ENCODE measurements at regions of chr17 and their contacts with region 1.

Region 1: DNA sequence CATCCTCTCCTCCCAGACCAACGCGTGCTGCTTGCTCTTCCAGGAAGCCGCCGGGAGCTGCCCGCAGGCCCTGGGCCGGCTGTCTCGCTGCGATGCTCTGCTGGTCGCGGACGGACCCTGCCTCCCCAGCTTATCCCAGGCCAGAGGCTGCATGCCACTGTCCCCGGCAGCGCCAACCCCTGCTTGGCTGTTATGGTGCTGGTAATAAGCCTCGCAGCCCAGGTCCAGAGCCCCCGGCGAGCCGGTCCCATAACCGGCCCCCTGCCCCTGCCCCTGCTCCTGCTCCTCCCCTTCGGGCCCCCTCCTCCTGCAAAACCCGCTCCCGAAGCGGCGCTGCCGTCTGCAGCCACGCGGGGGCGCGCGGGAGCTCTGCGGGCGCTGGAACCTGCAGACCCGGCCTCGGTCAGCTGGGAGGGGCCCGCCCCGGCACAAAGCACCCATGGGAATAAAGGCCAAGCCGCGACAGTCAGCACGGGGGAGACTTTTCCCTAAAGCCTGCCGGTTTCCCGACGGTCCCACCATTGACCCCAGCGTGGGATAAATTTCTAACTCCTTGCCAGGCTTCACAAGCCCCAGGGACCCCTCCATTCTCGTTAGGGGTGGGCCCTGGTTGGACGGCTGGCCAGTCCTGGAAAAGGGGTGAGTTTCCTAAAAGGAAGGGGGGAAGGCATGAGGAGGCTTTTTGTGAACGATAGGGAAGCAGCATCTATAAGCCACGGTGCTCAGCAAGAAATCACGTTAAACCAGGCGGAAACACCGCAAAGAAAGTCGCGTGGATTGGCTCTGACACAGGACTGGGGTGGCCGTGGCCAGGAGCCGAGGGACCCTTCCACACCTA is 11.2 kb downstream of the ENPP7 start:
- DNase-seq: peak; percentile 71
- ATAC-seq: peak; percentile 55
- H3K4me3 Mint-ChIP-seq: no peak overlapping the region
- H3K27ac Mint-ChIP-seq: no peak overlapping the region
- H3K4me1 Mint-ChIP-seq: peaks cover 10% of the 10 kb centered on the region
- H3K27me3 Mint-ChIP-seq: peaks cover 43% of the 10 kb centered on the region

Region 2: GRCh38 chr17:79728226-79728907 is 13.6 kb before region 1 on chr17:
- CTCF ChIA-PET with region 1: interaction called, 18 read pairs
- DNase-seq: peak; percentile 93
- ATAC-seq: peak; percentile 89
- H3K4me3 Mint-ChIP-seq: peak overlapping the region; percentile 60
- H3K27ac Mint-ChIP-seq: peak overlapping the region; percentile 85
- H3K4me1 Mint-ChIP-seq: peaks cover 19% of the 10 kb centered on the region
- H3K27me3 Mint-ChIP-seq: no peaks in the 10 kb centered on the region

Region 3: GRCh38 chr17:79777894-79778503 is 36.0 kb after region 1 on chr17 and contains the start of gene CBX2:
- CTCF ChIA-PET with region 1: interaction called, 28 read pairs
- DNase-seq: peak; percentile 81
- ATAC-seq: peak; percentile 87
- H3K4me3 Mint-ChIP-seq: peak within 1 kb of the TSS; percentile 77
- H3K27ac Mint-ChIP-seq: peak within 1 kb of the TSS; percentile 47
- H3K4me1 Mint-ChIP-seq: peaks cover 12% of the 10 kb centered on the region
- H3K27me3 Mint-ChIP-seq: peaks cover 67% of the 10 kb centered on the region
- total RNA-seq, gene CBX2: 5.3 to 6.8 TPM

Region 4: GRCh38 chr17:79991140-79991923 is 249.4 kb after region 1 on chr17:
- CTCF ChIA-PET with region 1: interaction called, 10 read pairs
- DNase-seq: peak; percentile 90
- ATAC-seq: peak; percentile 95
- H3K4me3 Mint-ChIP-seq: peak overlapping the region; percentile 51
- H3K27ac Mint-ChIP-seq: no peak overlapping the region
- H3K4me1 Mint-ChIP-seq: peaks cover 30% of the 10 kb centered on the region
- H3K27me3 Mint-ChIP-seq: peaks cover 18% of the 10 kb centered on the region